A549 (cell line): ENCODE measurements at regions of chr11 and their contacts with region 1.

Region 1: DNA sequence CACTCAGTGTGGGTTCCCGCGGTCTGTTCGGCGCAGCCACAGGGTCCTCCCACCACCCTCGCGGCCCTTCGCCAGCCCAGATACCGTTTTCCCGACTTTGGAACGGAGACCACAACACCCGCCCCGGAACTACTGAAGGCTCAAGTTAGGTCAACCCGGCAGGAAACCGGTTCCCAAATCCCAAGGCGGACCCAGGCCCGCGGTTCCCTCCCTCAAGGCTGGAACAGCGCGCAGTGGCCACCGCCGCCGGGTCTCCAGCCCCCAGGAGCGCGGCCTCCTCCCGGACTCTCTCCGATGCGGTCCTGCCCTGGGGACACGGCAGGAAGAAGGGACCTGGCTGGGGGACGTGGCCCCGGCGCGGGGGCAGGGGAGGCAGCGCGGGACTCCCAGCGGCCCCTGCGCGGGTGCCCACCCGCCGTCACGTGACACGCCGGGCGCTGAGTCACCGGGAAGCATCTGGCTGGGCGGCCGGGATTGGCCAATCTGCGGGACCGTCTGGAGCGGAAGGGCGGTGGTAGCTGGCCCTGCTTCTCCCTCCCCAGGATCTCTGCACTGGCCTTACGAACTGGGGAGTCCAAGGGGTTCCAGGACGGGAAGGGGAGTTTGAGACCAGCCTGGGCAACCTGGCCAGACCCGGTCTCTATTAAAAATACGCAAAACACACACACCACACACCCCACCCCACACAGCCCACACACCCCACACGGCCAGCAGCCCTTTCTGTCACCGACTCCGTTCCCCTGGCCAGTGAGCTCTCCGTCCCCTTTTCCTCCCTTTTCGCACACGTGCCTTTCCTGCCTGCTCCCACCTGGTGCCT is 21.5 kb upstream of the MALAT1 start:
- DNase-seq: peak; percentile 94 to 95
- ATAC-seq: peak; percentile 82 to 84
- H3K4me3 ChIP-seq: peak overlapping the region; percentile 54
- H3K27ac ChIP-seq: peak overlapping the region; percentile 93 to 99
- H3K4me1 ChIP-seq: peaks cover 79% of the 10 kb centered on the region
- CTCF ChIP-seq: no peak
- EP300 ChIP-seq: peak in 1 of 2 experiments; percentile 24; a peak in 1 of 5 replicates
- POLR2A ChIP-seq: peak; percentile 36
- RAD21 ChIP-seq: peak; percentile 0 to 28; a peak in 2 of 5 replicates

Region 2: GRCh38 chr11:65403607-65404121 is 73.7 kb before region 1 on chr11:
- CTCF ChIA-PET with region 1: no interaction called
- POLR2A ChIA-PET with region 1: no interaction called
- DNase-seq: no peak
- ATAC-seq: peak in 1 of 2 experiments; percentile 7; a peak in 1 of 6 replicates
- H3K4me3 ChIP-seq: no peak overlapping the region
- H3K27ac ChIP-seq: no peak overlapping the region
- H3K4me1 ChIP-seq: 0 out of 3 replicates have a peak, but pooled peaks cover 4% of the 10 kb centered on the region
- CTCF ChIP-seq: no peak
- EP300 ChIP-seq: no peak
- POLR2A ChIP-seq: no peak
- RAD21 ChIP-seq: no peak

Region 3: DNA sequence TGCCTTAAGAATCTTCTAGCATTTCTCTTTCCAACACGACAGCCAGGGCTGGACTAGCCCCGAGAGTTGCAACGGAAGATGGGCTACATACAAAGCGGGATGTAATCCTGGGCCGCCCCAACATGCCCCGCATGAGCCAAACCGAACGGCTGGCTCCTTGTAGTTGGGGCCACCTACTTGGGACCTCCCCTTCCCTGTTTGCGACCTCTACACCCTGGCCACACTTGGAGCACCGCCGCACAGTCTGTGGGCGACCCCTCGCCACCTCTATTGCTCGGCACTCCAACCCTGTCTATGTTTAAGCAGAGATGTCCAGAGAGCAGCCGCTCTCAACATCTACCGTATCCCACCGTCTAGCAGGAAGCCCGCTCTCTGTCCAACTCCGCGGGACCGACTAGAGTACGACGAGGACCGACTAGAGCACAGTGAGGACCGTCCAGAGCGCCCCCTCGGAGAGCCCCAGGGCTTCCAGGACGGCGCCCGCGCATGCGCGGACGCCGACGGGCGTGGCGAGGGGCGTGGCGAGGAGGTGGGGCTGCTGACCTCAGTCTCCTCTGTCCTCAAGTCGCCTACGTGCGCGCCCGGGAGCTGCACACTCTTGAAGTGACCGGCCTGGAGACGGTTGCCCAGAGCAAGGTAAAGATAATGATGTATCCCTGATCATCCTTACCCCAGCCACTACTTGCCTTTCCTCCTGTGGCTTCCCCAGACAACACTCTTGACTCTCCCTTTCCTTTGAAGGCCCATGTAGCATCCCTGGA is 22.5 kb before region 1 on chr11:
- CTCF ChIA-PET with region 1: interaction called, 57 read pairs
- POLR2A ChIA-PET with region 1: interaction called, 10 read pairs
- DNase-seq: peak; percentile 88 to 91
- ATAC-seq: peak; percentile 85 to 86
- H3K4me3 ChIP-seq: peak overlapping the region; percentile 66
- H3K27ac ChIP-seq: peak overlapping the region; percentile 92 to 96
- H3K4me1 ChIP-seq: peaks cover 37% of the 10 kb centered on the region
- CTCF ChIP-seq: peak; percentile 37; the same call in 1 of the 3 replicates
- EP300 ChIP-seq: no peak
- POLR2A ChIP-seq: peak; percentile 90
- RAD21 ChIP-seq: no peak; a peak in 1 of 5 replicates